ENCODE measurements at regions of chr2 and their contacts with region 1.

Region 1: GRCh38 chr2:149894760-149895159 is 307.2 kb upstream of the MMADHC start:
- DNase-seq: no peak
- ATAC-seq: no peak
- H3K4me3 ChIP-seq: no peak overlapping the region
- H3K27ac ChIP-seq: no peak overlapping the region
- H3K4me1 ChIP-seq: no peaks in the 10 kb centered on the region
- H3K27me3 ChIP-seq: no peaks in the 10 kb centered on the region
- CTCF ChIP-seq: no peak

Region 2: GRCh38 chr2:149858901-149859634 is 35.7 kb before region 1 on chr2:
- CTCF ChIA-PET with region 1: no interaction called
- POLR2A ChIA-PET with region 1: no interaction called
- intact Hi-C with region 1: loop called (anchors 1 kb)
- DNase-seq: peak; percentile 65
- ATAC-seq: peak; percentile 76
- H3K4me3 ChIP-seq: no peak overlapping the region
- H3K27ac ChIP-seq: peak overlapping the region; percentile 77
- H3K4me1 ChIP-seq: peaks cover 32% of the 10 kb centered on the region
- H3K27me3 ChIP-seq: no peaks in the 10 kb centered on the region
- CTCF ChIP-seq: no peak

Measured in PC-3 (cell line).